ENCODE measurements at regions of chr3 and their contacts with region 1.

Region 1: GRCh38 chr3:36540888-36541518 is 160.7 kb downstream of the STAC start:
- DNase-seq: peak in 1 of 2 experiments; percentile 52
- H3K4me3 ChIP-seq: no peak overlapping the region
- H3K27ac ChIP-seq: no peak overlapping the region
- H3K4me1 ChIP-seq: no peaks in the 10 kb centered on the region
- H3K27me3 ChIP-seq: no peaks in the 10 kb centered on the region
- CTCF ChIP-seq: peak in 2 of 3 experiments; percentile 70 to 79; a peak in 3 of 4 replicates
- EP300 ChIP-seq: no peak
- POLR2A ChIP-seq: no peak
- RAD21 ChIP-seq: peak; percentile 81 to 83

Region 2: GRCh38 chr3:36557021-36557707 is 16.2 kb after region 1 on chr3:
- CTCF ChIA-PET with region 1: interaction called, 16 read pairs
- POLR2A ChIA-PET with region 1: no interaction called
- DNase-seq: no peak
- H3K4me3 ChIP-seq: no peak overlapping the region
- H3K27ac ChIP-seq: no peak overlapping the region
- H3K4me1 ChIP-seq: no peaks in the 10 kb centered on the region
- H3K27me3 ChIP-seq: no peaks in the 10 kb centered on the region
- CTCF ChIP-seq: no peak
- EP300 ChIP-seq: no peak
- POLR2A ChIP-seq: no peak
- RAD21 ChIP-seq: no peak

Measured in H1 (cell line).